Naive thymus-derived CD4-positive, alpha-beta T cell (primary cell): ENCODE measurements at regions of chr2 and their contacts with region 1.

Region 1: GRCh38 chr2:200864176-200864976 is at the start of gene CLK1:
- DNase-seq: peak; percentile 87 to 97 (median 94)
- ATAC-seq: peak; percentile 89
- H3K4me3 ChIP-seq: peak within 1 kb of the TSS; percentile 100
- H3K4me3 Mint-ChIP-seq: peak within 1 kb of the TSS; percentile 89 to 98 (median 94)
- H3K27ac ChIP-seq: peak within 1 kb of the TSS; percentile 98
- H3K27ac Mint-ChIP-seq: peak within 1 kb of the TSS; percentile 99 to 100 (median 100)
- H3K4me1 ChIP-seq: peaks cover 23 to 26% of the 10 kb centered on the region in 2 donors
- H3K4me1 Mint-ChIP-seq: peaks cover 28 to 58% (median 48%) of the 10 kb centered on the region in 7 donors
- H3K27me3 ChIP-seq: no peaks in the 10 kb centered on the region
- H3K27me3 Mint-ChIP-seq: peaks cover 0 to 2% (median 0%) of the 10 kb centered on the region in 5 donors
- total RNA-seq, gene CLK1: 134 to 974 (median 502) TPM

Region 2: GRCh38 chr2:200578778-200579177 is 285.6 kb before region 1 on chr2:
- CTCF ChIA-PET with region 1: no interaction called
- POLR2A ChIA-PET with region 1: no interaction called
- intact Hi-C with region 1: loop called in 1 of 2 experiments (anchors 10 kb)
- DNase-seq: peak in 4 of 9 donors; percentile 3 to 13 (median 10)
- ATAC-seq: peak; percentile 64
- H3K4me3 ChIP-seq: no peak overlapping the region
- H3K4me3 Mint-ChIP-seq: no peak overlapping the region
- H3K27ac ChIP-seq: no peak overlapping the region
- H3K27ac Mint-ChIP-seq: no peak overlapping the region
- H3K4me1 ChIP-seq: no peaks in the 10 kb centered on the region
- H3K4me1 Mint-ChIP-seq: peaks cover 0 to 15% (median 0%) of the 10 kb centered on the region in 7 donors
- H3K27me3 ChIP-seq: no peaks in the 10 kb centered on the region
- H3K27me3 Mint-ChIP-seq: peaks cover 0 to 5% (median 4%) of the 10 kb centered on the region in 5 donors

Region 3: DNA sequence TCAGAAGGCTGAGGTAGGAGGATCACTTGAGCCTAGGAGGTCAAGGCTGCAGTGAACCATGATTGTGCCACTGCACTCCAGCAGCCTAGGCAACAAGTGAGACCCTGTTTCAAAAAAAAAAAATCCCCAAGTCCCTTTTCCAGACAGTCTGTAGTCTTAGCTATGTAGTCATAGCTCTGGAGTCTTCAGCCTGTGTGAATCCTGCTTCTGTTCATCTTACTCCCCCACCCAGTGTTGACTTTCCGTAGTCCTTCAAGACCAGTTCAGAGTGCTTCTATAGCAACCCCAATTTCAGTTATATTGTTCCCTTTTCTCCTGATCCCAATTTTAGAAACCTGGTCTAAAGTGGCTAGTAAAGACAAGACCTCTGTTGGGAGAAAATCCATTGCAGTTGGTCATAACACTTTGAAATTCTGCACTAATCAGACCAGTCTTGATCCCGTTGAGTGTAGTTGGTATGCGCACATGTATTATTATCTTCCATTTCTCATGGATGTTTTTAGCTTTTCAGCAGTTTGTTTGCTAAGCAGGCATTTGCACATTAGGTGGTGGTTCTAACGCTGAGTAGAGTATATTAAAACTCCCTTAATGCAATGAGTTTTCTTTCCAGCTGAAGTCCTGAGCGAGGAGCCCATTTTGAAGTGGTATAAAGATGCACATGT is 43.7 kb before region 1 on chr2:
- CTCF ChIA-PET with region 1: no interaction called
- POLR2A ChIA-PET with region 1: interaction called, 36 read pairs
- intact Hi-C with region 1: no loop called
- DNase-seq: no peak
- ATAC-seq: no peak
- H3K4me3 ChIP-seq: no peak overlapping the region
- H3K4me3 Mint-ChIP-seq: no peak overlapping the region
- H3K27ac ChIP-seq: no peak overlapping the region
- H3K27ac Mint-ChIP-seq: peak overlapping the region in 8 of 9 donors; percentile 10 to 52 (median 24)
- H3K4me1 ChIP-seq: no peaks in the 10 kb centered on the region
- H3K4me1 Mint-ChIP-seq: peaks cover 5 to 25% (median 11%) of the 10 kb centered on the region in 7 donors
- H3K27me3 ChIP-seq: no peaks in the 10 kb centered on the region
- H3K27me3 Mint-ChIP-seq: no peaks in the 10 kb centered on the region

Region 4: GRCh38 chr2:200877443-200877842 is 13.1 kb after region 1 on chr2:
- CTCF ChIA-PET with region 1: no interaction called
- POLR2A ChIA-PET with region 1: interaction called, 16 read pairs
- intact Hi-C with region 1: loop called in 1 of 2 experiments (anchors 1 kb)
- DNase-seq: no peak
- ATAC-seq: no peak
- H3K4me3 ChIP-seq: no peak overlapping the region
- H3K4me3 Mint-ChIP-seq: no peak overlapping the region
- H3K27ac ChIP-seq: no peak overlapping the region
- H3K27ac Mint-ChIP-seq: no peak overlapping the region
- H3K4me1 ChIP-seq: no peaks in the 10 kb centered on the region
- H3K4me1 Mint-ChIP-seq: peaks cover 0 to 13% (median 6%) of the 10 kb centered on the region in 7 donors
- H3K27me3 ChIP-seq: no peaks in the 10 kb centered on the region
- H3K27me3 Mint-ChIP-seq: no peaks in the 10 kb centered on the region

Region 5: DNA sequence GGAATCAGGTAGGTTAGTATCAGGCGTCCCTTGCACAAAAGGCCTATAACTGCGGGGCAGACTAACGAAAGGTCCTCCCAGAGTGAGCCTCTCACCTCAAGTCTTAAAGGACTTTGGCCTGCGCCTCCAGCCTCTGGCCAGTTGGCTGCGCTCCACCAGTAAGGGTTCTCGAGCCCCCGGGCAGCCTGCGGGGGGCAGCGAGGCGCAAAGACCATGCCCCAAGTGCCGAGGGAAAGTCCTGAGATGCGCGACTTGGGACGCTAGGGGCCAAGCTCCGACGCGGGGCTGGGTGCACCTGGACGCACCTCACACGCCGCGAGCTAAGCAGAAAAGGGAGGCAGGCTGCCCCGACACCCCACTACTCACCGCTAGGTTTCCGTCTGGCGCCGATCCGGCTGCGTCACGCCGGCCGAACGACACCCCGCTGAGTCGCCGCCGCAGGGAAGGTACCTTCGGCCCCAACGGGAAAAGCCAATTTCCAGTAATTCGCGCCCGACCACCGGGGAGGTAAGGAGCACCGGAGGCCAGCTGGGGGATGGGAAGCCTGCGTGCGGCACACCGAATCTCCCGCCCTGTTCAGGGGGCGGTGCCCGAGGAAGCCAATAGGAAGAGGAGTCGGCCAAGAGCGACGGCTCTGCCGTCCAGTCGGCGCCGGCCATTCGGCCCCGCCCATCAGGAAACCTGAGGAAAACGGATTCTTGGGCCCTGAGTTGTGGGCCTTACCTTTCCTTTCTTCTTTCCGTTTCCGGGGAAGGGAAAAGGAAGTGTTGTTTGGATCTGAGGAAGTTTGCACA is 98.9 kb after region 1 on chr2 and contains the start of gene ORC2:
- CTCF ChIA-PET with region 1: interaction called, 3 read pairs
- POLR2A ChIA-PET with region 1: interaction called, 27 read pairs
- intact Hi-C with region 1: loop called (anchors 1 kb)
- DNase-seq: peak; percentile 92 to 97 (median 95)
- ATAC-seq: peak; percentile 98
- H3K4me3 ChIP-seq: peak within 1 kb of the TSS; percentile 89
- H3K4me3 Mint-ChIP-seq: peak within 1 kb of the TSS; percentile 89 to 100 (median 98)
- H3K27ac ChIP-seq: peak within 1 kb of the TSS; percentile 90
- H3K27ac Mint-ChIP-seq: peak within 1 kb of the TSS; percentile 96 to 100 (median 99)
- H3K4me1 ChIP-seq: peaks cover 21 to 32% of the 10 kb centered on the region in 2 donors
- H3K4me1 Mint-ChIP-seq: peaks cover 40 to 83% (median 70%) of the 10 kb centered on the region in 7 donors
- H3K27me3 ChIP-seq: no peaks in the 10 kb centered on the region
- H3K27me3 Mint-ChIP-seq: no peaks in the 10 kb centered on the region
- total RNA-seq, gene ORC2: 29.8 to 78.0 (median 56.2) TPM

Region 6: DNA sequence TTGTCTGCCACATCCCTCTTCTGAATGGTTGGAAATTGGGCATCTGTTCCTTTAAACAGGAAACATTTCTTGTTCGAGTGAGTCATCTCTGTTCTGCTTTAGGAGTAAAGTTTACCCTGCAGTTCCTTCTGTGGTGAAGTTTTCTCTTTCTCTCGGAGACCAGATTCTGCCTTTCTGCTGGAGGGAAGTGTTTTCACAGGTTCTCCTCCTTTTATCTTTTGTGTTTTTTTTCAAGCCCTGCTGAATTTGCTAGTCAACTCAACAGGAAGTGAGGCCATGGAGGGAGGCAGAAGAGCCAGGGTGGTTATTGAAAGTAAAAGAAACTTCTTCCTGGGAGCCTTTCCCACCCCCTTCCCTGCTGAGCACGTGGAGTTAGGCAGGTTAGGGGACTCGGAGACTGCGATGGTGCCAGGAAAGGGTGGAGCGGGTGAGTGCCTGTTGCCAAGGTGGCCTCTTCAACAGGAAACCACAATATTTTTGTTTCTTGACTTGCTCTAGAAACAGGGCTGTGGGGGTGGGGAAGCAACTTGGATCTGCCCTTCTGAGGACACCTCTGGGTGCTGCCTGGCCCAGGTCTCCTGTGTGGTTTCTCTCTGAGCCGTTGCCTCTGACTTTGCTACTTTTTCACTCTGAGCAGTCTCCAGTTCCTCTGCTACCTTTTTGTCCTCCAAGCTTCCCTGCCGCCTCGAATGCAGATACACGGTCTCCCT is 393.7 kb after region 1 on chr2:
- CTCF ChIA-PET with region 1: no interaction called
- POLR2A ChIA-PET with region 1: interaction called, 5 read pairs
- intact Hi-C with region 1: loop called (anchors 1 kb)
- DNase-seq: peak; percentile 72 to 99 (median 98)
- ATAC-seq: peak; percentile 84
- H3K4me3 ChIP-seq: peak overlapping the region; percentile 80
- H3K4me3 Mint-ChIP-seq: peak overlapping the region; percentile 85 to 100 (median 94)
- H3K27ac ChIP-seq: peak overlapping the region; percentile 91
- H3K27ac Mint-ChIP-seq: peak overlapping the region; percentile 95 to 99 (median 98)
- H3K4me1 ChIP-seq: peaks cover 63 to 71% of the 10 kb centered on the region in 2 donors
- H3K4me1 Mint-ChIP-seq: peaks cover 44 to 91% (median 75%) of the 10 kb centered on the region in 7 donors
- H3K27me3 ChIP-seq: no peaks in the 10 kb centered on the region
- H3K27me3 Mint-ChIP-seq: no peaks in the 10 kb centered on the region

Region 7: DNA sequence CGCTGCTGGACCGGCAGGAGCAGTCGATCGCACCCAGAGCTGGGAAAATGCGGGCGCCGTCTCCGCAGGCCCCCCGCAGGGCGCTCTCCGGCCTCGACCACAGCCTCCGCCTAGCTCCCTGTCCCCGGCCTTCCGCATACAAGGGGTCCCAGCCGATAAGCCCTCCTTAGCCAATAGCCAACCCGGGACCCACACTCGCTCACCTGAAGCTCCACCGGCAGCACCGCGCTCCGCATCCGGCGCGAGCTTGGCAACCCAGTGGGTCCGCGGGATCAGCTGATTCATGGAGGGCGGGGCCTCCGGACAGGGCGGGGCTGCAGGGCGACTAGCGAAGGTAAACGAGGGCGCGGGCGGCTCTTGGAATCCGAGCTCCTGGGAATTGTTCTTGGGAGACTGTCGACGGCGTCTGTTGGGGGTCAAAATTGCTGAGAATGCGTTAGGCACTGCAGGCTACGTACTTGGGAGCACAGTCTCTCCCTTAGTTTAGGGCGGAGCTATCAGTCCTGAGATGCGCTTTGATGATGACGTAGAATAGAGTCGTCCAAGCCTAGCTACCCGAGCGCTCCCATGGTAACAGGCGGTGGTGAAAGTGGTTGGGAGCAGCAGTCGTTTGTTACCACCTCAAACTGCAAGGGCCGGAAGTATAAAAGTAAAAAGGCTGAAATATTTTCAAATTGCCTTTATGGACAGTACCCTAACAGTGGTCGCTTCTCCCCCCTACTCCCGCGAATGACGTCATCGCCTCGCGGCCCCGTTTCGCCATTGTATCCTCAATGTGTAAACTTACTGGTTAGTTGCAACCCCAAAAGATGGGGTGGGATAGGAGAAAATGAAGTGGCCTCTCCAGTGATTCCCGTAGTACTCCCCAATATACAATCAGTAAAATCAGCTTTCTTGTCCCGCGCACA is 916.6 kb after region 1 on chr2 and contains the start of gene ALS2:
- CTCF ChIA-PET with region 1: no interaction called
- POLR2A ChIA-PET with region 1: interaction called, 3 read pairs
- intact Hi-C with region 1: loop called in 1 of 2 experiments (anchors 2 kb)
- DNase-seq: peak; percentile 91 to 97 (median 95)
- ATAC-seq: peak; percentile 96
- H3K4me3 ChIP-seq: peak within 1 kb of the TSS; percentile 96
- H3K4me3 Mint-ChIP-seq: peak within 1 kb of the TSS; percentile 87 to 99 (median 98)
- H3K27ac ChIP-seq: peak within 1 kb of the TSS; percentile 84
- H3K27ac Mint-ChIP-seq: peak within 1 kb of the TSS; percentile 84 to 99 (median 97)
- H3K4me1 ChIP-seq: peaks cover 7 to 10% of the 10 kb centered on the region in 2 donors
- H3K4me1 Mint-ChIP-seq: peaks cover 5 to 36% (median 21%) of the 10 kb centered on the region in 7 donors
- H3K27me3 ChIP-seq: no peaks in the 10 kb centered on the region
- H3K27me3 Mint-ChIP-seq: peaks cover 0 to 22% (median 0%) of the 10 kb centered on the region in 5 donors
- total RNA-seq, gene ALS2: 8.9 to 13.5 (median 10.7) TPM